ENCODE measurements at regions of chr17 and their contacts with region 1.

Region 1: DNA sequence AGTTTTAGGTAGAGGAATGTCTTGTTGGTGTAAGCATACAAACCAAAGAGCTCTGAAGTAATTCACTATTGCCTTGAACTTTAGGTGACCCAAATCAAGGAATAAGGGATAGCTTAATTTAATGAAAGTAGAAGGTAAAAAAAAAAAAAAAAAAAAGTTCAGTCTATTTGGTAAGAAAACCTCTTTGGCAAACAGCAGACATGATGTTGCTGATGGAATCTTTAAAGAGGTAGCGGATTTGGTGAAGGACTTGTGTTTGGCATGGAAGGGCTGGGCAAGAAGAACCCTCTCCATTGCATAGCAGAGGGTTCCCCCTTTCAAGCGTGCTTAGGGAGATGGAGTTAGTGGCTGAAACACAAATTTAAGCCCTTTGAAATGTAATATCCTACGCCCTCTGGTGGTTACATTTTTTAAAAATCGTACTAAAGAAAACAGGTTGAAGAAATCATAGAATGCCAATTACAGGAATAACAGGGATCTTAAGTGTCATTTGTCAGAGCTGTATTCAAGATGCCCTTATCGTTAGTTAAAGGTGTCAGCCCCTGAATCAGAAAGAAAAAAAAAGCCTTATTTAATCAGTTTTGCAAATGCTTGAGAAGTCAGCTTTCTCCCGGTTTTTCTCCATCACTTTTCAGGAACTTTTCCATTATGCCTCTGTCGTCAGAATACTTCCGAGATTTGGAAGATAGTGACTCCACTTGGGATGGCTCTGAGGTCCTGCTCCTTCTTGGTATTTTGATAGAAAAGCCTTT is 383.1 kb downstream of the KCNJ2 start:
- DNase-seq: peak; percentile 69
- H3K4me3 ChIP-seq: no peak overlapping the region
- H3K27ac ChIP-seq: no peak overlapping the region
- H3K4me1 ChIP-seq: no peaks in the 10 kb centered on the region
- CTCF ChIP-seq: peak; percentile 87

Region 2: GRCh38 chr17:69539781-69540319 is 1012.6 kb before region 1 on chr17:
- CTCF ChIA-PET with region 1: no interaction called
- POLR2A ChIA-PET with region 1: no interaction called
- intact Hi-C with region 1: loop called (anchors 5 kb)
- DNase-seq: no peak
- H3K4me3 ChIP-seq: no peak overlapping the region
- H3K27ac ChIP-seq: no peak overlapping the region
- H3K4me1 ChIP-seq: no peaks in the 10 kb centered on the region
- CTCF ChIP-seq: no peak

Region 3: GRCh38 chr17:70137451-70138230 is 414.8 kb before region 1 on chr17:
- CTCF ChIA-PET with region 1: no interaction called
- POLR2A ChIA-PET with region 1: no interaction called
- intact Hi-C with region 1: loop called (anchors 5 kb)
- DNase-seq: peak; percentile 5
- H3K4me3 ChIP-seq: no peak overlapping the region
- H3K27ac ChIP-seq: no peak overlapping the region
- H3K4me1 ChIP-seq: no peaks in the 10 kb centered on the region
- CTCF ChIP-seq: no peak

Region 4: DNA sequence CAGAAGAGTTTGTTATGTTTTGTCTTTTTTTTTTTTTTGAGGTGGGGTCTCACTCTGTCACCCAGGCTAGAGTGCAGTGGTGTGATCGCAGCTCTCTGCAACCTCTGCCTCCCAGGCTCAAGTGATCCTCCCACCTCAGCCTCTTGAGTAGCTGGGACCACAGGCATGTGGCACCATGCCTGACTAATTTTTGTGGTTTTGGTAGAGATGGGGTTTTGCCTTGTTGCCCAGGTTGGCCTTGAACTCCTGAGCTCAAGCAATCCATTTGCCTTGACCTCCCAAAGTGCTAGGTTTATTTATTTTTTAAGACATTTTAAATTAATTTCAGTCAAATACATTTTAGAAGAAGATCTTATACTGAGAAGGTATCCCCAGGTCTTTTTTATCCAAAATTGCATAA is 16.4 kb before region 1 on chr17:
- CTCF ChIA-PET with region 1: no interaction called
- POLR2A ChIA-PET with region 1: no interaction called
- intact Hi-C with region 1: no loop called
- DNase-seq: no peak
- H3K4me3 ChIP-seq: no peak overlapping the region
- H3K27ac ChIP-seq: no peak overlapping the region
- H3K4me1 ChIP-seq: no peaks in the 10 kb centered on the region
- CTCF ChIP-seq: no peak